ENCODE measurements at regions of chr18 and their contacts with region 1.

Region 1: GRCh38 chr18:36809590-36810381 is 19.0 kb downstream of the TPGS2 start:
- DNase-seq: peak; percentile 76
- CTCF ChIP-seq: peak; percentile 74

Region 2: GRCh38 chr18:36792634-36793283 is 17.0 kb before region 1 on chr18:
- CTCF ChIA-PET with region 1: interaction called, 24 read pairs
- POLR2A ChIA-PET with region 1: no interaction called
- DNase-seq: no peak
- CTCF ChIP-seq: no peak

Region 3: GRCh38 chr18:36798738-36799473 is 10.9 kb before region 1 on chr18:
- CTCF ChIA-PET with region 1: interaction called, 24 read pairs
- POLR2A ChIA-PET with region 1: no interaction called
- DNase-seq: no peak
- CTCF ChIP-seq: no peak

Region 4: GRCh38 chr18:36821681-36822080 is 11.9 kb after region 1 on chr18:
- CTCF ChIA-PET with region 1: interaction called, 41 read pairs
- POLR2A ChIA-PET with region 1: no interaction called
- DNase-seq: no peak
- CTCF ChIP-seq: no peak

Region 5: DNA sequence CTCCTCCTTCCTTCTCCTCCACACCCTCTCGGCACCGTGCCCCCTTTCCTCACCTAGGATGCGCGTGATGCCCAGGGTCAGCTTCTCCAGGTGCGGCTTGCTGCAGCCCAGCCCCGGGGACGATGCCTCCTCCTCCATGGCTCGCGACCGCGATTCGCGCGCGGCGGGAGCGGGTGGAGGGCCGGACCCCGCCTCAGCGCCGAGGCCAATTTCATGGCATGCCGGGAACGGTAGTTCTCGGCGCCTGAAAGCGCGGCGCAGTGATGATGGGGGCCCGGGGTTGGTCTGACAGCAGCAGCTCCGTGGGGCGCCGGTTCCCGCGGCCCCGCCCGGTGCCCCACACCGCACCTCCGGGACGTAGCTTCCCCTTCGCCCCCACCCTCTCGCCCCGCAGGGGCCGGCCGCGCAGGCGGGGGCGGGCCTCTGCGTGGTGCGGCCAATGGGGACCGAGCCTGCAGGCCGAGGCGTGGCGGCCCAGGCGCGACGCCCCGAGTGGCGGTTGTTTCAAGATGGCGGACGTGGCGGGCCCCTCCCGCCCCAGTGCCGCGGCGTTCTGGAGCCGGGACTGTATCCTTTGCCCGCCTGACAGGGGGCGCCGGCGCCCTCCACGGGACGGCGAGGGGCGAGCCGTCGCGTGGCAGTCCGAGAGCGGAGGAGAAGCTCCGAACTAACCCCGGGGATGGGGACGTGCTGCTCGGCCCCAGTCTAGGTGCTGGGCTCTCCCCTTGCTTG is 19.0 kb after region 1 on chr18 and contains the starts of genes KIAA1328 and TPGS2:
- CTCF ChIA-PET with region 1: interaction called, 35 read pairs
- POLR2A ChIA-PET with region 1: no interaction called
- DNase-seq: peak; percentile 93
- CTCF ChIP-seq: peak; percentile 41